ENCODE measurements at regions of chr6 and their contacts with region 1.

Region 1: DNA sequence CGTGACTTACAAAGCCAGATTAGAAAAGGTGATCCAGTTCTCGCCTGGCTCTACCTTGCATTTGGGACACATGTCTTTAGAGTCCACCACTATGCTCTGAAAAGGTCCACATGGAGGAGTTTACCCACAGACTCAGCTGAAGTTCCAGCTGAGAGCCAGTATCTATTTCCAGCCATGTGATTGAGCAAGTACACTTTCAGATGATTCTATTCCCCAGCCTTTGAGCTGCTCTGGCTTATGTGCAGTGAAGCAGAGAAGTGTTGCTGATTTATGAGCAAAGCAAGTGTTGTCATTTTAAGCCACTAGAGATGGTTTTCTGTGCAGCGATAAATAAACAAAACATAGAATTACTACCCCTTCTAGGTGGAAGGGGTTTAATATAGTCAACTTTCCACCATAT is 520.8 kb upstream of the RNF217 start:
- DNase-seq: no peak
- ATAC-seq: no peak

Region 2: GRCh38 chr6:124234801-124235200 is 206.6 kb before region 1 on chr6:
- intact Hi-C with region 1: no loop called
- DNase-seq: no peak
- ATAC-seq: no peak

Region 3: GRCh38 chr6:124487623-124488431 is 46.4 kb after region 1 on chr6:
- intact Hi-C with region 1: no loop called
- DNase-seq: no peak
- ATAC-seq: no peak

Region 4: GRCh38 chr6:124659427-124659826 is 218.0 kb after region 1 on chr6:
- intact Hi-C with region 1: no loop called
- DNase-seq: no peak
- ATAC-seq: no peak

Region 5: GRCh38 chr6:124683507-124683906 is 242.1 kb after region 1 on chr6:
- intact Hi-C with region 1: no loop called
- DNase-seq: no peak
- ATAC-seq: no peak

Region 6: DNA sequence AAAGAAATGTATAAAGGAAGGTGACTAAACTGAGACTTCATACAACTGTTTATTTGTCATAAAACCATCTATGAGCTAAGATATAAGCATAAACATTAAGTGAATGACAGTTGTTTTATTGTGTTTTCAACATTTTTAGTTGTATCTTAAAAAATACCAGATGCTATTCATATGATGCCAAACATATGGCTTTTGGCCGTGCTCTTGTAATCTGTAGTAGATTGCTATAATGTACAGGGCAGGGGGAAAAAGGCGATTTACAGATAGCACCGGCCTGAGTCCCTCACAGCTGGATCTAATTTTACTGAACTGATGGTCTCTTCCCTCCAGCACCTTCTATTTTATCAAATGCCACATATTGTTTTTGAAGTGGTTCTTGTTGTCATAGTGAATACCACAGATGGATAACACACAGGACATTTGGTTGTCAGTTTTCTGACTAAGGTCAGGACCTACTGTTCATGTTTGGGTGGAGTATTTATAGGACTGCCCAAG is 1946.7 kb after region 1 on chr6:
- intact Hi-C with region 1: loop called (anchors 10 kb)
- DNase-seq: no peak
- ATAC-seq: no peak

Measured in left ventricle myocardium superior (tissue), 1 donor.